CD14-positive monocyte (primary cell): ENCODE measurements at regions of chr7 and their contacts with region 1.

Region 1: GRCh38 chr7:85041605-85042216 is 145.1 kb downstream of the SEMA3D start:
- DNase-seq: peak in 1 of 3 donors; percentile 5
- H3K4me3 ChIP-seq: no peak overlapping the region
- H3K4me3 Mint-ChIP-seq: no peak overlapping the region
- H3K27ac ChIP-seq: no peak overlapping the region
- H3K27ac Mint-ChIP-seq: no peak overlapping the region
- H3K4me1 ChIP-seq: no peaks in the 10 kb centered on the region
- H3K4me1 Mint-ChIP-seq: no peaks in the 10 kb centered on the region
- H3K27me3 ChIP-seq: no peaks in the 10 kb centered on the region
- H3K27me3 Mint-ChIP-seq: peaks cover 1 to 4% (median 1%) of the 10 kb centered on the region in 3 donors
- CTCF ChIP-seq: peak; percentile 54

Region 2: GRCh38 chr7:84841809-84842208 is 199.9 kb before region 1 on chr7:
- intact Hi-C with region 1: no loop called
- DNase-seq: no peak
- H3K4me3 ChIP-seq: no peak overlapping the region
- H3K4me3 Mint-ChIP-seq: no peak overlapping the region
- H3K27ac ChIP-seq: no peak overlapping the region
- H3K27ac Mint-ChIP-seq: no peak overlapping the region
- H3K4me1 ChIP-seq: no peaks in the 10 kb centered on the region
- H3K4me1 Mint-ChIP-seq: peaks cover 3% of the 10 kb centered on the region
- H3K27me3 ChIP-seq: no peaks in the 10 kb centered on the region
- H3K27me3 Mint-ChIP-seq: peaks cover 0 to 1% (median 0%) of the 10 kb centered on the region in 3 donors
- CTCF ChIP-seq: no peak

Region 3: DNA sequence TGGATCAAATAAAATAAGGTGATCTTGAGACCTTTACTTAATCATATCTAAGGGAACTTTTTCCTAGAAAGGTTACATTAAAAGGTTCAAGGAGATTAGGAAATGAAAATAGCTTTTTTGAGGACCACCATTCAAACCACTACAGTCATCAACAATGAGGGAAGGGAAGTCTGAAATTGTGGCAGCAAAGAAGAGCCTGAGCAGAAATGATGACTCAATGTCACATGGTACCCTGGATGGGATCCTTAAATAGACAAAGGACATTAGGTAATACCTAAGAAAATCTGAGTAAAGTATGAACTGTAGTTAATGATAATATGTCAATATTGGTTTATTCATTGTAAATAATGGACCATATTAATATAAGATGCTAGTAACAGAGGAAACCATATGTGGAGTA is 90.9 kb before region 1 on chr7:
- intact Hi-C with region 1: no loop called
- DNase-seq: peak in 1 of 3 donors; percentile 5
- H3K4me3 ChIP-seq: no peak overlapping the region
- H3K4me3 Mint-ChIP-seq: no peak overlapping the region
- H3K27ac ChIP-seq: no peak overlapping the region
- H3K27ac Mint-ChIP-seq: no peak overlapping the region
- H3K4me1 ChIP-seq: no peaks in the 10 kb centered on the region
- H3K4me1 Mint-ChIP-seq: peaks cover 1% of the 10 kb centered on the region
- H3K27me3 ChIP-seq: no peaks in the 10 kb centered on the region
- H3K27me3 Mint-ChIP-seq: no peaks in the 10 kb centered on the region
- CTCF ChIP-seq: no peak

Region 4: DNA sequence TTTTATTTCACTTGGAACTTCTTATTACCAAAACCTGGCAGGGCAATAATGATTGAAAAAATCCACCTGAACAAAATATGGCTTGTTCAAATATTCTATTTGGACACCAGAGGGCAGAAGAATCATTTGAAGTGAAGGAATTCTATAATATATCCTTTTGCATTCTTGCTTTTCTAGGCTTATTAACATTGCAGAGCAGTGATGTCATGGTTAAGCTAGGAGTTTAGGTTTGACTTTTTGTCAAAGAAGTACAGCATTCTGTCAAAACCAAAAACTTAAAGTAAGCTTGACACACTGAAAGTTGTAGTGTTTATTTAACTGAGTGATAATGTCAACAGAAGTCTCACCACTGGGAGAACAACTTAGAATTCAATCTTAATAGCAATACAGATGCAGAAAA is 10.8 kb before region 1 on chr7:
- intact Hi-C with region 1: no loop called
- DNase-seq: no peak
- H3K4me3 ChIP-seq: no peak overlapping the region
- H3K4me3 Mint-ChIP-seq: no peak overlapping the region
- H3K27ac ChIP-seq: no peak overlapping the region
- H3K27ac Mint-ChIP-seq: no peak overlapping the region
- H3K4me1 ChIP-seq: no peaks in the 10 kb centered on the region
- H3K4me1 Mint-ChIP-seq: no peaks in the 10 kb centered on the region
- H3K27me3 ChIP-seq: no peaks in the 10 kb centered on the region
- H3K27me3 Mint-ChIP-seq: no peaks in the 10 kb centered on the region
- CTCF ChIP-seq: peak; percentile 26

Region 5: DNA sequence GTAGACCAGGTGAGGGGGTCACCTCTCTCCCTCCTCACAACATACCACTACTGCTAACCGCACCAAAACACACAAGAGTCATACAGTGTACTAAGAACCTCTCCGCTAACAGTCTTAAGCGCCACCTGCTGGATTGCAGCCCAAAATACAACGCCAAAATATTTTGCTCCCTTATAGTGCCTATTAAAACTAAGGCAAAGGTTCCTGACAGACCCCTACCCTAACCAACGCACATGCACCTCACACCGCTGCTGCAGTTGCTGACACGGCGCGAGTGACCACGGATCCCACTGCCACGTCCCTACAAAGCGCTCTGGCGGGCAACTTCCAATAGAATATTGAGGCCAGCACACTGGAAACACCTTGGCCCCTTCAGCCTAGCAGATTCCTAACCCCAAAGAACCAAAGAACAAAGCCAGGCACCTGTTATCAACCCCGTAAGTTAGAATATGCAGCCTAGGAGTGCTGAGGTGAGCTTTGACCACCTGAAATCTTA is 708.8 kb after region 1 on chr7:
- intact Hi-C with region 1: loop called in 1 of 2 experiments (anchors 10 kb)
- DNase-seq: peak in 2 of 3 donors; percentile 9 to 11
- H3K4me3 ChIP-seq: no peak overlapping the region
- H3K4me3 Mint-ChIP-seq: no peak overlapping the region
- H3K27ac ChIP-seq: no peak overlapping the region
- H3K27ac Mint-ChIP-seq: peak overlapping the region in 1 of 7 donors; percentile 9
- H3K4me1 ChIP-seq: no peaks in the 10 kb centered on the region
- H3K4me1 Mint-ChIP-seq: no peaks in the 10 kb centered on the region
- H3K27me3 ChIP-seq: no peaks in the 10 kb centered on the region
- H3K27me3 Mint-ChIP-seq: peaks cover 0 to 2% (median 2%) of the 10 kb centered on the region in 3 donors
- CTCF ChIP-seq: peak; percentile 43

Region 6: DNA sequence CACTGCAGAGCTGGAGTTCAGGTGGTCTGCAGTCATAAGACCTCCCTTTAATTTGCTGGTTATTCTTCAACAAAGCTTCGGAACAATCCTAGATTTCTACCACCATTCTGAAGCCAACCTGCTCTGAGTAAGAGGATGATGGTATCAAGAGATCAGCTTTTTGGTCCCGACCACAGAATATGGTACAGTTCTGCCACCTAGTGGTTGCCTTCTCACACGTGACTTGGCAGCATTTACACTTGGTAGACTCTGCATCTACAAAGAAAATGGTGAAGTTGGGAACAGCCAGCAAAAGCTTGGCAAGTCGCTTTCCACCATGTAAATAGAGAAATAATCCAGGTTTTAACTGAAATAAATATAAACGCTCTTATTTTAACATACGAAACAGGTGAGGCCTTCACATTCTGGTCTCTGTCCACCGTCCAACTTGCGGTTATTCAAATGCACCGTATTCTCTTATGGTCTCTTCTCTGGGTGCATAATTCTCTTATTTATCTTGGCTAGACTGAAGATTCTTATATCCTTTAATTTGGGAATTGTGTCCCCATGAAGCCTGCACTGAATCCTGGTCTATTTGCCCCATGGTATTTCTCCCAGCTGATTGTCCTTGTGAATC is 1428.1 kb after region 1 on chr7:
- intact Hi-C with region 1: loop called in 1 of 2 experiments (anchors 10 kb)
- DNase-seq: peak in 2 of 3 donors; percentile 1 to 13
- H3K4me3 ChIP-seq: no peak overlapping the region
- H3K4me3 Mint-ChIP-seq: no peak overlapping the region
- H3K27ac ChIP-seq: no peak overlapping the region
- H3K27ac Mint-ChIP-seq: no peak overlapping the region
- H3K4me1 ChIP-seq: no peaks in the 10 kb centered on the region
- H3K4me1 Mint-ChIP-seq: no peaks in the 10 kb centered on the region
- H3K27me3 ChIP-seq: no peaks in the 10 kb centered on the region
- H3K27me3 Mint-ChIP-seq: no peaks in the 10 kb centered on the region
- CTCF ChIP-seq: peak; percentile 68